GM13976 (cell line): ENCODE measurements at regions of chr19 and their contacts with region 1.

Region 1: GRCh38 chr19:54297760-54298305 is 15.1 kb downstream of the LILRA5 start:
- DNase-seq: no peak
- CTCF ChIP-seq: no peak

Region 2: DNA sequence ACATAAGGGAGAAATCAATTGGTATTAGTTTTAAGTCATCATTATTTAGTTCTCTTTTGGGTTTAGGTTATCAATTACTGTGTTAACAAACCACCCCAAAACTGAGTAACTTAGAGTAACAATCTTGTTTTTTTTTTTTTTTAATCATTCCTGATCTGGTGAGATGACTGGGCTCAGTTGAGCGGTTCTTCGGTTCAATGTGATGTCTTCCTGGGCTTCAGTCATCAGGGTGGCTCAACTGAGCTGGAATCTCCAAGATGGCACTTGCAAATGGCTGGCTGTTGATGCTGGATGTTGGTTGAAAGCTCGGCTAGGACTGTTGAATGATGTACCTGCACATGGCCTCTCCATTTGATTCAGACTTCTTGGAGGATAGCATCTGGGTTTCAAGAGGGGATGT is 213.4 kb before region 1 on chr19:
- in situ Hi-C with region 1: no loop called
- DNase-seq: no peak
- CTCF ChIP-seq: no peak

Region 3: DNA sequence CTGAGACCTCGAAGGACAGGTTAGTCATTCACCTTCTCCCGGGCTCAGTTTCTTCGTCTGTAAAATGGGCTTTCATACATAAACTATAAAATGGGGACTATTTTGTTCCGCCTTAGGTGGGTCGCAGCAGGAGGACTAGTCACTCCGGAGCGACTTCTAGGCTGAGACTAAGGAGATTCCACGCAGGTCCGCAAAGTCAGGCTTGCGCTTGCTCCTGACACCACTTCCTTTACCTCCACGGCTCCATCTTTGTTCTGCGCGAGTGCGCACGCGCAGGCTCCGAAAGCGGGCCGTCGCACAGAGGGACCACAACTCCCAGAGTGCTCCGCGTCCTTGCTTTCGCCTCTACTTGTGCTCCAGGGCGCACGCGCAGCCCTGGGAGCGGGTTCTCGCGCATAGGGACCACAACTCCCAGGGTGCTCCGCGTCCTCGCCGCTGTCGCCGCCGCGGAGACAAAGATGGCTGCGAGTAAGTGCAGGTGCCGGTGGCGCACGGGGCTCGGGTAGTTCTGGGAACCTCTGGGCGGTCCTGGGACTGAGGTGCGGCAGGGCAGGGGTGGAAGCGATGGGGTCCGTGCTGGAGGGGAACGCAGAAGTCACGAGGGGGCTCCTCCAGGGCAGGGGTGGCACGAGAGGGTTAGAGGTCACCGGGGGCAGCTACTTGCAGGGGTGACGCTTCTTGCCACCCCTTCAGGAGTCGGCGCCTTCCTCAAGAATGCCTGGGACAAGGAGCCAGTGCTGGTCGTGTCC is 195.2 kb before region 1 on chr19 and contains the start of gene NDUFA3:
- in situ Hi-C with region 1: no loop called
- DNase-seq: peak; percentile 100
- CTCF ChIP-seq: no peak

Region 4: DNA sequence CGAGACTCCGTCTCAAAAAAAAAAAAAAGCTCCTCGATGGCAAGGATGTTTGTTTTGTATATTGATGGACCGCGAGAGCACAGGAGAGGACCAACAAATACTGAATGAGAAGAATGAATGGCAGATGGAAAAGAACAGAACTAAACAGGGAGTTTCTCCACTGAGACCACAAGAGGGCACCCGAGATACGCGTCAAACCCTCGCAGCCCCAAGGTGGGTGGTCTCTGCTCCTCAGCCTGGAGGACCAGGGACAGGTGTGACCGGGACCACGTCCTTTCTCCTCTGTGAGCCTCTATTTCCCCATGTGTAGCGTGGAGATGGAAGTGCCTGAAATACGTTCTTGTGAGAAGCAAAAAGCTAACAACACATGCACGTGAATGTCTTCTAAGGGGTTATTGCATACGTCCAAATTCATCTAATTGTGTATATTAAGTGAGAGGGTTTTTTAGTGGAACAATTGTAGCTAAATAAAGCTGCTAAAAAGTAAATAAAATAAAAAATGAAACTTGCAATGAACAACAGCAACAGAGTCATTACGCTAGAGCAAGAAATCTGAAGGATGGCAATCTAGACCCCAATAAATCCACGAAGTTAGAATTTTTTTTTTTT is 183.6 kb after region 1 on chr19:
- in situ Hi-C with region 1: no loop called
- DNase-seq: peak; percentile 70
- CTCF ChIP-seq: peak; percentile 76

Region 5: GRCh38 chr19:54576411-54576976 is 278.7 kb after region 1 on chr19:
- in situ Hi-C with region 1: loop called (anchors 5 kb)
- DNase-seq: no peak
- CTCF ChIP-seq: no peak